Activated CD4-positive, alpha-beta memory T cell treated with anti-CD3 and anti-CD28 coated beads for 36 hours (primary cell): ENCODE measurements at regions of chr4 and their contacts with region 1.

Region 1: GRCh38 chr4:26583865-26584652 is at the start of gene TBC1D19:
- DNase-seq: peak; percentile 94
- H3K4me3 Mint-ChIP-seq: peak within 1 kb of the TSS; percentile 97
- H3K27ac Mint-ChIP-seq: peak within 1 kb of the TSS; percentile 93
- H3K4me1 Mint-ChIP-seq: peaks cover 20% of the 10 kb centered on the region
- H3K27me3 Mint-ChIP-seq: no peaks in the 10 kb centered on the region
- total RNA-seq, gene TBC1D19: 4.3 to 5.0 TPM

Region 2: DNA sequence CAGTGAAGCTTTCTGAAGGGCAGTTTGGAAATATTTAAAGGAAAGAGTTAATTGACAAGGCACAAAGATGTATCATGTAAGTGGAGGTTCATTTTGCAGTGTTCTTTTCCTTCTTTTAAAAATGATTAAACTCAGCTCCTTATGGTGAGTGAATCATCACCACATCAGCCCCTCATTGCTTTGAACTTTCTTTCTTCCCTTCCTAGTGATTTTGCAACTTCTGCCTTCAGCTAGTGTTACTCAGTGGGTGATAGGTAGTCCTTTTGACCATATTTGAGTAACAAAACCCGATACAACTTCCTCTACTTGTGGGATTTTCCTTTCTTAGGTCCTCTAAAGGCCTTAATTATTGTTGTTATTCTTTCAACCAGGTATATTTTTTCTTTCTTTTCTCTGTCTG is 1263.3 kb before region 1 on chr4:
- CTCF ChIA-PET with region 1: no interaction called
- POLR2A ChIA-PET with region 1: no interaction called
- intact Hi-C with region 1: loop called (anchors 10 kb)
- DNase-seq: no peak
- H3K4me3 Mint-ChIP-seq: no peak overlapping the region
- H3K27ac Mint-ChIP-seq: peak overlapping the region; percentile 79
- H3K4me1 Mint-ChIP-seq: peaks cover 25% of the 10 kb centered on the region
- H3K27me3 Mint-ChIP-seq: no peaks in the 10 kb centered on the region

Region 3: GRCh38 chr4:26459054-26459755 is 124.9 kb before region 1 on chr4:
- CTCF ChIA-PET with region 1: no interaction called
- POLR2A ChIA-PET with region 1: no interaction called
- intact Hi-C with region 1: loop called (anchors 1 kb)
- DNase-seq: no peak
- H3K4me3 Mint-ChIP-seq: peak overlapping the region; percentile 33
- H3K27ac Mint-ChIP-seq: no peak overlapping the region
- H3K4me1 Mint-ChIP-seq: peaks cover 10% of the 10 kb centered on the region
- H3K27me3 Mint-ChIP-seq: no peaks in the 10 kb centered on the region

Region 4: DNA sequence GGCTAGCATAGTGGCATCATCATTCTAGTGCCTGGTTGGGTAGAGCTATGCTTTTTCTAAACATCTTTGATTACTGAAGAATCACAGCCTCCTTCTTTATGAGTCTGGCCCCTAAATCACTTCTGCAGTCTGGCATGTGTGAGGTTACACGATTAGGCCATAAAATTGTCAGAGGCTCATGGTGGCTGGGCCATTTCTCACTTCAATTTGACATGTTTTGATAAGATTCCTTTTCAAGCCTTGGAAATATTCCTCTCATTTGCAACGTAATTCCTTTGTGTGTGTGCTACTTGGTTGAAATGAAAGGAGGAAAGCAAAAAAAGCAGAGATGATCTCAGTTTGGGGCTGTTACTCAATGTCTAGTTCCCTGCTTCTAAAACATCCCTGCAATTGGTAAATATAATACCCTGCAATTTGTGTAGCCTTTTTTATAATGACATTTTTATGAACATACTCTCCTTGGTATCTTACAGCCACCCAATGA is 100.0 kb before region 1 on chr4:
- CTCF ChIA-PET with region 1: no interaction called
- POLR2A ChIA-PET with region 1: no interaction called
- intact Hi-C with region 1: no loop called
- DNase-seq: no peak
- H3K4me3 Mint-ChIP-seq: no peak overlapping the region
- H3K27ac Mint-ChIP-seq: no peak overlapping the region
- H3K4me1 Mint-ChIP-seq: no peaks in the 10 kb centered on the region
- H3K27me3 Mint-ChIP-seq: peaks cover 4% of the 10 kb centered on the region

Region 5: DNA sequence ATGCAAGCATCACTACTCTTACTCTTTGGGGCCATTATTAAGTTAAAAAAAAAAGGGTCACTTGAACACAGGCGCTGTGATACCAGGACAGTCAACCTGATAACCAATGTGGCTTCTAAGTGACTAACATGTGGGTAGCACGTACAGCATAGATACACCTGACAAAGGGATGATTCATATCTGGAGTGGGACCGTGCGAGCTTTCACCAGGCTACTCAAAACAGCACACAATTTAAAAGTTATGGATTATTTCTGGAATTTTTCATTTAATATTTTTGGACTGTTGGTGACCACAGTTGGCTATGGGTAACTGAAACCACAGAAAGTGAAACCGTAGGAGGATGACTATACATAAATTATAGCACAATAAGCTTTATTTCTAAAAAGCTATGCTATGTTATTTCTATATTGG is 162.7 kb after region 1 on chr4:
- CTCF ChIA-PET with region 1: no interaction called
- POLR2A ChIA-PET with region 1: no interaction called
- intact Hi-C with region 1: loop called (anchors 5 kb)
- DNase-seq: peak; percentile 72
- H3K4me3 Mint-ChIP-seq: no peak overlapping the region
- H3K27ac Mint-ChIP-seq: no peak overlapping the region
- H3K4me1 Mint-ChIP-seq: peaks cover 13% of the 10 kb centered on the region
- H3K27me3 Mint-ChIP-seq: no peaks in the 10 kb centered on the region

Region 6: DNA sequence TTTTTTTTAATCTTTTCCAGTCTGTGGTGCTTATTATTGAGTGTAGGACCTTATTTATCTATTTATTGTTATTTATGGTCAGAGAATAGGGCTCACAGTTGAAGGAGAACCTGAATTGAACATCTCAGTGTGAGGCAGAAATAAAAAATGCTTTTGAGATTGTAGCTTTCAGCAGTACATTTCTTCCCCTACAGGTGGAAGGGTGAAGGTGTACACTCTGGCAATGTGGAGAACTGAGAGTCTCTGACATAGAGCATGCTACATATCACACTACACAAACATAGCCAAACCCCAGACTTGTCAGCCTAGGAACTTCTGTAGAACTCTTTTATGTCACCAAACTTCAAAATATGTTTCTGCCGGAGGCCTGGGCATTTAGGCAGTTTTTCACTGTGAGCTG is 416.8 kb after region 1 on chr4:
- CTCF ChIA-PET with region 1: interaction called, 3 read pairs
- POLR2A ChIA-PET with region 1: no interaction called
- intact Hi-C with region 1: loop called (anchors 2 kb)
- DNase-seq: no peak
- H3K4me3 Mint-ChIP-seq: no peak overlapping the region
- H3K27ac Mint-ChIP-seq: peak overlapping the region; percentile 51
- H3K4me1 Mint-ChIP-seq: peaks cover 52% of the 10 kb centered on the region
- H3K27me3 Mint-ChIP-seq: no peaks in the 10 kb centered on the region